Left lung (tissue), 14 donors: ENCODE measurements at regions of chr17 and their contacts with region 1.

Region 1: DNA sequence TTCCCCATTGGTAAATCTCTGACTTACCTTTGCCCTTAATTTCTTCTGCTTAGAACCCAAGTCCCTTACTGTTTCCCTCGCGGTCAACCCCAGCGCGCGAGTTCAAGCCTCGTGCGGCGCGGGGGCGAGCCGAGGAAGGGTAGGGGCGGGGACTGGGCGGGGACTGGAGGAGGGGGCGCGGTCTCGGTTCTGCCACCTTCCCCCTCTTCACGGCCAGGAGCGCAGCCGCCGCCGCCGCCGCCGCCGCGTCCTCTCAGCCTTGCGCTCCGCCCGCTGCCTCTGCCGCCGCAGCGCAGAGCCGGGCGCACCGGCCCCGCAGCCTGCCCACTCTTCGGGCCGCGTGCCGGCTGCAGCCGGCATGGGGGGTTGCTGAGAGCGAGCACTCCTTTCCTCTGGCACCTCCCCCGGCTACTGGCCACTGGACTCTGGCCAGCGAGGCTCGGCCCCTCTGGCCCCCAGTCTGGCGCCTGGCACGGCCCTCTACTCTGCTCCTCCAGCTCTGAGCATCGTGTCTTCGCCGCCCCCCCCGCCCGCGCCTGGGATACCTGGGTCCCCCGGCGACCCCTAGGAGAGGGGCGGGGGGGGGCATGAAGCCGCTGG is at the start of gene RAPGEFL1:
- DNase-seq: peak; percentile 54 to 95 (median 76)
- ATAC-seq: peak; percentile 85
- H3K4me3 ChIP-seq: peak within 1 kb of the TSS; percentile 39 to 41
- H3K27ac ChIP-seq: peak within 1 kb of the TSS in 1 of 2 donors; percentile 33
- H3K4me1 ChIP-seq: peaks cover 14 to 23% of the 10 kb centered on the region in 2 donors
- H3K27me3 ChIP-seq: peaks cover 0 to 15% of the 10 kb centered on the region in 2 donors
- CTCF ChIP-seq: no peak
- polyA plus RNA-seq, gene RAPGEFL1: 6.3 to 10.3 (median 7.5) TPM

Region 2: DNA sequence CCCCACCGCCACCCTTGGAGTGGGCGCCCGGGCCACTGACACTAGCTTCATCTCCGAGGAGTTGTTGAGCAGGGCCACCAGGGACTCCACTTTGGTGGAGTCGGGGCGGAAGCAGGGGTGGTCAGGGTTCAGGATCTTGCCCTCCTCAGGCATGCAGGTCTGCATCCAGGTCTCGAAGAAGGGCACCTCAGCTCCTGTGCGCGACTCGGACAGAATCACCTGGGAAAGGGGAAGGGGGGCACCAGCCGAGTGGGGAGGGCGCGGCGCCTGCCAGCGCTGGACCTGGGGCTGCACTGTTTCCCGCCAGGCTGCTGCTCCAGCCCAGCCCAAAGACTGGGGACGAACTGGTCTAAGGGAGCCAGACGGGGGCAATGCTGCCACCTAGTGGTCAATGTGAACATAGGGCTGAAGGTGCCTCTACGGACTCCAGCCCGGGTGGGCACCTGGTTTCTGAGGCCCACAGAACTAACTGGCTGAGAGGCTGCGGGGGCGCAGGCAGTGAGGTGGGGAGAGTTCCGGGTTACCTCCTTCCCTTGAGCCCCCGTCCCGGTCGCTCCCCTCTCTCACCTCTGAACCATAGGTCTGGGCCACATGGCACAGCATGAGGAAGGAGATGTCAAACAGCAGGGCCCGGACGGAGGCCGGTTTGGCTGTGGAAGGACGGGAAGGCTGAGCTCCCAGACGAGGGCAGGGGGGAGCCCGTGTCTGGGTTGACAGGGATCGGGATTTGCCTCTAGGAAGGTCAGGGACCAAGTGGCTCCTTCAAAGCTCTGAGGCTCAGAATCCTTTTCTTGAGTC is 150.4 kb before region 1 on chr17:
- intact Hi-C with region 1: loop called in 1 of 2 experiments (anchors 10 kb)
- DNase-seq: peak; percentile 70 to 92 (median 84)
- ATAC-seq: peak; percentile 80
- H3K4me3 ChIP-seq: no peak overlapping the region
- H3K27ac ChIP-seq: no peak overlapping the region
- H3K4me1 ChIP-seq: peaks cover 14 to 50% of the 10 kb centered on the region in 2 donors
- H3K27me3 ChIP-seq: no peaks in the 10 kb centered on the region
- CTCF ChIP-seq: peak; percentile 90 to 97

Region 3: DNA sequence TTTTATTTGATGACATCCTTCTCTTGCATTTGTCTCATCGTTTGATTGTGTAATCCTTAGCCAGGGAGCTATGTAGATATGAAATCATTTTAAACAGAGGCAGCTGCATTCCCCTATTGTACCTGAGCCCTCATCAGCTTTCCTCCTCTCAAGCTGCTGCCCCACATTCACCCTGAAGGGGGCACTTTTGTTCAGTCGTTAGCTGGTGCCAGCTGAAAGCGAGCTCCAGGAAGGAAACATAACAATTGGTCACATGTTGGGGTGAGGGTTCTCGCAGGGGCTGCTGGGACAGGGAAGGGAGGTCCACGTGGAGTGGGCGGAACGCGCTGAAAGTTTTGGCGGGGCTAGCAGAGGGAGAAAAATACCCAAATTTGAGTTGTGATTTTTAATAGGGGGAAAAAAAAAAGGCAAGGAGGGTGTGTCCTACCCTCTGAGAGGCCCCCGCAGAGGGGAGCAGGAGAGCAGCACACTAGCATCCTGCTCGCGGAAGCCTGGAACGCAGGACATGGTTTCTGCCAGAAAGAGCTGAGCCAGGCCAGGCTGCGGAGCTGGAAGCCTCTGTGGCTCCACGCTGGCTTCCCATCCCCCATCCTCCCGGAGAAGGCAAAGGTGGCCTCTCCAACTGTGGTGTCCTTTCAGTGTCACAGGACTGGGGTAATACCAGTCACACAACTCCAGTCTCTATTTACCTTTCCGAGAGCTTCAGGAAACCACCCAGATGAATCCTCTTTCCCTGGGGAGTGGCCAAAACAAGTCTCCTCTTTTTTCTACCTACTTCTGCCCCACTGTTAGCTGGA is 64.1 kb before region 1 on chr17:
- intact Hi-C with region 1: loop called in 1 of 2 experiments (anchors 10 kb)
- DNase-seq: peak; percentile 93 to 97 (median 94)
- ATAC-seq: peak; percentile 83
- H3K4me3 ChIP-seq: peak overlapping the region; percentile 40 to 47
- H3K27ac ChIP-seq: peak overlapping the region; percentile 79 to 92
- H3K4me1 ChIP-seq: peaks cover 44 to 61% of the 10 kb centered on the region in 2 donors
- H3K27me3 ChIP-seq: no peaks in the 10 kb centered on the region
- CTCF ChIP-seq: peak; percentile 84 to 95

Region 4: DNA sequence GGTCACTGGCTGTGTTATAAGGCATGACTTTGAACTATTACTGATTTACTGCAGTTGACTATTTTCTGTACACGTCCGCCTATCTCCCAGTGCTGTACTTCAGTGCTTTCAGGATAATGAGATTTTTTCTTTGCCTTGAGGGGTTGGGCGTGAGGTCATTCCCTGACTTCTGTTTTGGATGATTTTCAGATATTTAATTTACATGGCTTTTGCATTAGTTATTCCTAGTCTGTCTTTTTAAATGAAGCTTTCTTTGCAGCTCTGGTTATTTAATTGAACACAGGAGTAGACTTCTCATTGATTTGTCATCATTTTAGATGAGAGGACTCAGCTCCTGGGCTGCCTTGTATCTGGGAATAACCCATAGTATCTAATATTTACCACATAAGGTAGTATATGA is 65.4 kb after region 1 on chr17:
- intact Hi-C with region 1: no loop called
- DNase-seq: no peak
- ATAC-seq: no peak
- H3K4me3 ChIP-seq: no peak overlapping the region
- H3K27ac ChIP-seq: no peak overlapping the region
- H3K4me1 ChIP-seq: peaks cover 9 to 33% of the 10 kb centered on the region in 2 donors
- H3K27me3 ChIP-seq: no peaks in the 10 kb centered on the region
- CTCF ChIP-seq: no peak